Endothelial cell of umbilical vein (primary cell): ENCODE measurements at regions of chr7 and their contacts with region 1.

Region 1: DNA sequence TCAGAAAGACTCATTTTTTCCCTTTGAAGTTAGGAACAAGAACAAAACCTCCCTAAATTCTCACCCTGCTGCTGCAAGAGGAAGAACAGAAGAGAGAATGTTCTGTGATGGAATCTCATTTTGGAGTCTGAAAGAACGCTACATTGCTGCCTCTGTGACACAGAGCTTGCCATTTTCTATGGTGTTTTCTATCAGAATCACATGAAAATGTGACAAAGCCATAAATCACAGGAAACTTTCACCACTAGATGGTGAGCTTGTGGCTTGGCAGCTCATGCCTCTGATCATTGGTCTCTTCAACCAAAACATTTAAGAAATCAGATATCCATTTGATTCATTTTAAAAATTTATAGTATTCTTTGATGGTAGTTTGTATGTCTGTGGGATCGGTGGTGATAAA is 82.9 kb downstream of the CADPS2 start:
- DNase-seq: peak; percentile 74
- H3K4me3 ChIP-seq: no peak overlapping the region
- H3K27ac ChIP-seq: peak overlapping the region; percentile 46
- H3K4me1 ChIP-seq: peaks cover 16% of the 10 kb centered on the region
- H3K27me3 ChIP-seq: no peaks in the 10 kb centered on the region
- CTCF ChIP-seq: peak; percentile 35
- POLR2A ChIP-seq: no peak

Region 2: DNA sequence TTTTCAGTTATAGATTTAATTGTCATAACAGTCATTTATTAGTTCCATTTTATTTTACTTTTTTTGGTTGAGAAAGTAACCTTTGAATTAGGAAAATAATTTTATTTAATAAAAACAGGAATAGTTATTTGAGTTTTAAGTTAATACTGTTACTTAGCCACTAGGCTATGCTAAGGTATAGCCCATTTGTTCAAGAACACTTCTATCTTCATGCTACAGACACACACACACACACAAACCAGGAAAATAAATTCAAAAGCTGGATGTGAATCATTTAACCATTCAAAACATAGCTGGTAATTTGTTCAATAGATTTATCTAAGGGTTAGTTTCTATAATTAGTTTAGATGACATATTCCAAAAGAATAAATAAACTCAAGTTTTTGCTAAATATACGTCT is 252.8 kb before region 1 on chr7:
- CTCF ChIA-PET with region 1: interaction called, 12 read pairs
- POLR2A ChIA-PET with region 1: no interaction called
- dilution Hi-C with region 1: no loop called
- intact Hi-C with region 1: no loop called
- DNase-seq: peak; percentile 63
- H3K4me3 ChIP-seq: no peak overlapping the region
- H3K27ac ChIP-seq: no peak overlapping the region
- H3K4me1 ChIP-seq: no peaks in the 10 kb centered on the region
- H3K27me3 ChIP-seq: no peaks in the 10 kb centered on the region
- CTCF ChIP-seq: peak in 1 of 2 donors; percentile 20
- POLR2A ChIP-seq: no peak

Region 3: DNA sequence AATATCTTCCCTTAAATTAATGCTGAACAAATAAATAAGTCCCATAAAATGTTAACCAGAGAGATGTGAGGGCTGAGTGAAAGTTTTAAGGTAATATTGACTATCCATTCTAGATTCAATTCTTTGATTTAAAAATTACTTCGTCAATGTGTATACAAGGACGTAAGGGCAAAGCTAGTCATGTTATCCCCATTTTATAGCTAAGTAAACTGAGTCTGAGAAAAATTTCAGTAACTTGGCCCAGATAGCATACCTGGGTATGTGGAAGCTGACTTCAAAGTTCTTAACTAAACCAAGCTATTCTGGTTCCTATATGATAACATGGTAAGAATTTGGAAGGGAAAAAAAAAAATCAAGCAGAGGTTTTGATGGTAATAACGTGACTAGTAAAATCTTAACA is 10.5 kb after region 1 on chr7:
- CTCF ChIA-PET with region 1: interaction called, 13 read pairs
- POLR2A ChIA-PET with region 1: no interaction called
- dilution Hi-C with region 1: no loop called
- intact Hi-C with region 1: no loop called
- DNase-seq: no peak
- H3K4me3 ChIP-seq: no peak overlapping the region
- H3K27ac ChIP-seq: no peak overlapping the region
- H3K4me1 ChIP-seq: no peaks in the 10 kb centered on the region
- H3K27me3 ChIP-seq: no peaks in the 10 kb centered on the region
- CTCF ChIP-seq: no peak
- POLR2A ChIP-seq: no peak

Region 4: GRCh38 chr7:123041101-123041500 is 237.8 kb after region 1 on chr7:
- CTCF ChIA-PET with region 1: no interaction called
- POLR2A ChIA-PET with region 1: no interaction called
- dilution Hi-C with region 1: no loop called
- intact Hi-C with region 1: loop called (anchors 2 kb)
- DNase-seq: peak; percentile 94
- H3K4me3 ChIP-seq: no peak overlapping the region
- H3K27ac ChIP-seq: peak overlapping the region; percentile 84
- H3K4me1 ChIP-seq: peaks cover 20% of the 10 kb centered on the region
- H3K27me3 ChIP-seq: no peaks in the 10 kb centered on the region
- CTCF ChIP-seq: no peak
- POLR2A ChIP-seq: no peak

Region 5: GRCh38 chr7:123534383-123535260 is 731.3 kb after region 1 on chr7 and contains the start of gene IQUB:
- CTCF ChIA-PET with region 1: no interaction called
- POLR2A ChIA-PET with region 1: no interaction called
- dilution Hi-C with region 1: no loop called
- intact Hi-C with region 1: loop called (anchors 10 kb)
- DNase-seq: peak; percentile 95
- H3K4me3 ChIP-seq: peak within 1 kb of the TSS; percentile 61 to 81 (median 80)
- H3K27ac ChIP-seq: peak within 1 kb of the TSS; percentile 74
- H3K4me1 ChIP-seq: peaks cover 27% of the 10 kb centered on the region
- H3K27me3 ChIP-seq: peaks cover 6 to 13% of the 10 kb centered on the region in 2 experiments
- CTCF ChIP-seq: no peak
- POLR2A ChIP-seq: no peak
- total RNA-seq, gene IQUB: not detected in 2 replicates